ENCODE measurements at regions of chrX and their contacts with region 1.

Region 1: DNA sequence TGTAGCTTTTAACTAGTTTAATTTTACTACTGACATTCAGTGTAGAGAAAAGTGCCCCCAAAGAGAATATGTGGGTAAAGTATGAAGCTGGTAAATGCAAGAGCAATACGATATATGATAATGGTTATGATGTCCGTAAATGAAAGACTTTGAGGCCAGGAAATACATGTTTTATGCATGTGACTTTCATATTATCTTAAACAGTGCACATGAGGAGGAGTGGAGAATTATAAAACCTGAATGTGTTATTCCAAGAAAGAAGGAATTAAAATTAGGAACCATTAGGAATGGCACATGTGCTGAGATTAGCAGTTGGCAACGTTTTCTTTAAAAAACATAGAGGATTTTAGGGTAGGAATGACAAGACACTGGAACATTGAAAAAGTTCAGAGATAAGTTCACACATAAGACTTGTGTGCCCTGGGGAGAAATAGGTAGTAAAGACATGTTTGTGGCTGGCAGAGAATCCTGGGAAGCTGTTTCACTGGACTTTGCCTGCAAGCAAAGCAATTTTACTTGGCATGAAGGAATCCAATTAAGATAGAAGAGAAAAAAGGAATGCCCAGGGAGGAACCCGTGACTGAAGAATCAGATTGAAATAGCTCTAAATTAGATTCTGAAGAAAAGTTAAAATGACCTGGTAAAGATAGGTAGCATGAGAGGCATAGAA is 20.0 kb downstream of the GK start:
- DNase-seq: no peak
- H3K4me3 ChIP-seq: no peak overlapping the region
- H3K27ac ChIP-seq: no peak overlapping the region
- H3K4me1 ChIP-seq: no peaks in the 10 kb centered on the region
- H3K27me3 ChIP-seq: no peaks in the 10 kb centered on the region
- CTCF ChIP-seq: no peak
- EP300 ChIP-seq: no peak
- POLR2A ChIP-seq: no peak
- RAD21 ChIP-seq: no peak

Region 2: DNA sequence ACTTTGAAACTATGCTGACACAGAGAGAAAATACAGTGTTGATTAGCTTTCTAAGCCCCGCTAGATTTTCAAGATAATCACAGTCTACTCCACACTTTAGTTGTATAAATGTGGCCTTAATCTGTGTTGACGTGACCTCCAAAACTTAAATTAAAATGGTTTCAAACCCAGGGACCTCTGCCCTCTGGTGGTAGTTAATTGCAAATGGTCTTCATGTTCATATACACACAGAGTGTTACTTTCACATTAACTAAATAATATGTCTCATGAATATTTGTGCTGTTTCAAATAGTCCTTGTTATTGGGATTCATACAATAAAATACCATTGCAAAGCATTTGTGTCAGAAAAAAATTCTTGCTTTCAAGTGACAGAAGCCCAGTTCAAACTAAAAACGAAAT is 160.0 kb before region 1 on chrX:
- CTCF ChIA-PET with region 1: no interaction called
- POLR2A ChIA-PET with region 1: no interaction called
- DNase-seq: no peak
- H3K4me3 ChIP-seq: no peak overlapping the region
- H3K27ac ChIP-seq: no peak overlapping the region
- H3K4me1 ChIP-seq: no peaks in the 10 kb centered on the region
- H3K27me3 ChIP-seq: no peaks in the 10 kb centered on the region
- CTCF ChIP-seq: peak in 2 of 3 experiments; percentile 6 to 40; a peak in 2 of 4 replicates
- EP300 ChIP-seq: no peak
- POLR2A ChIP-seq: no peak
- RAD21 ChIP-seq: peak; percentile 31 to 40

Region 3: DNA sequence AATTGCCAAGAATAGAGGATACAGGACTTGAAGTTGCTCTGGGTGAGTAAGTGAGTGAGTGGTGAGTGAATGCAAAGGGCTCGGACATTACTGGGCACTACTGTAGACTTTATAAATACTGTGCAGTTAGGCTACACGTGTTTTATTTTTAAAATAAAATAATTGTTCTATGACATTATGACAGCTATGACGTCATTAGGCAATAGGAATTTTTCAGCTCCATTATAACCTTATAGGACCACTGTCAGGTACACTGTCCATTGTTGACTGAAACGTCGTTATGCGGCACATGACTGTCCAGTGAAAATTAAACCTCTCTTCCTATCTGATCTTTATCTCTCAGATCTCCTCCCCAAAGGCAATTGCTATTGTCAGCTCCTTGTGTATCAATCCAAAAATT is 90.6 kb before region 1 on chrX:
- CTCF ChIA-PET with region 1: no interaction called
- POLR2A ChIA-PET with region 1: no interaction called
- DNase-seq: no peak
- H3K4me3 ChIP-seq: no peak overlapping the region
- H3K27ac ChIP-seq: no peak overlapping the region
- H3K4me1 ChIP-seq: no peaks in the 10 kb centered on the region
- H3K27me3 ChIP-seq: no peaks in the 10 kb centered on the region
- CTCF ChIP-seq: no peak
- EP300 ChIP-seq: no peak
- POLR2A ChIP-seq: no peak
- RAD21 ChIP-seq: no peak

Region 4: GRCh38 chrX:30659421-30659820 is 13.8 kb before region 1 on chrX:
- CTCF ChIA-PET with region 1: interaction called, 12 read pairs
- POLR2A ChIA-PET with region 1: no interaction called
- DNase-seq: no peak
- H3K4me3 ChIP-seq: no peak overlapping the region
- H3K27ac ChIP-seq: no peak overlapping the region
- H3K4me1 ChIP-seq: no peaks in the 10 kb centered on the region
- H3K27me3 ChIP-seq: no peaks in the 10 kb centered on the region
- CTCF ChIP-seq: no peak
- EP300 ChIP-seq: no peak
- POLR2A ChIP-seq: no peak
- RAD21 ChIP-seq: no peak

Region 5: DNA sequence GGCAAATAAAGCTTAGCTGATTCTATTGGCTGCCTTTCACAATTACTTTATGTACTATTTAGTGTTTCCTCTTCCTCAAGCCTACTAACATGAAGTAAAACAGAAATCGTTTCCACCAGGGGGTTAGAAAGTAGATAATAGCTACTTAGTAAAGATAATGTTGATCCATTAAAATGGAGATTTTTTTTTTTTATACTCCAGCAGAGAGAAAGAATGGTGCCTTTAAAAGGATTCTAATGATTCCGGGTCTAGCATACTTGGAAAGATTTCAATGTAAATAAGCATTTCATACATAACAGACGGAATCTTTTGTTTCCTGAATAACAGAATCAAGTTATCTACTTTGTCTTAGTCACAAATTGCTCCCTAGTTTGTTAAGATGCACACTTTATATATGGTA is 17.1 kb after region 1 on chrX:
- CTCF ChIA-PET with region 1: no interaction called
- POLR2A ChIA-PET with region 1: no interaction called
- DNase-seq: no peak
- H3K4me3 ChIP-seq: peak overlapping the region in 1 of 4 experiments; percentile 30; a peak in 1 of 8 replicates
- H3K27ac ChIP-seq: no peak overlapping the region; the same call in 1 of the 2 replicates
- H3K4me1 ChIP-seq: peaks cover 0 to 7% (median 2%) of the 10 kb centered on the region in 4 experiments; a peak in 4 of 7 replicates
- H3K27me3 ChIP-seq: no peaks in the 10 kb centered on the region
- CTCF ChIP-seq: no peak
- EP300 ChIP-seq: no peak
- POLR2A ChIP-seq: no peak
- RAD21 ChIP-seq: no peak

Region 6: DNA sequence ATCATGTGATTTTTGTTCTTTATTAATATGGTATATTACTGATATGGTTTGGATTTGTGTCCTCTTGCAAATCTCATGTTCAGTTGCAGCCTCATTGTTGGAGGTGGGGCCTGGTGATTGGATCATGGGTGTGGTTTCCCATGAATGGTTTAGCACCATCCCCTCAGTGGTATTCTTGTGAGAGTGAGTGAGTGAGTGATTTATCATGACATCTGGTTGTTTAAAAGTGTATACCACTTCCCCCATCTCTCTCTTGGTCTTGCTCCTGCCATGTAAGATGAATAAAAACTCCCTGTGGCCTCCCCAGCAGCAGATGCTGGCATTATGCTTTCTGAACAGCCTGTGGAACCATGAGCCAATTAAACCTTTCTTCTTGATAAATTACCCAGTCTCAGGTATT is 104.3 kb after region 1 on chrX:
- CTCF ChIA-PET with region 1: no interaction called
- POLR2A ChIA-PET with region 1: no interaction called
- DNase-seq: no peak
- H3K4me3 ChIP-seq: no peak overlapping the region
- H3K27ac ChIP-seq: no peak overlapping the region
- H3K4me1 ChIP-seq: no peaks in the 10 kb centered on the region
- H3K27me3 ChIP-seq: no peaks in the 10 kb centered on the region
- CTCF ChIP-seq: no peak
- EP300 ChIP-seq: no peak
- POLR2A ChIP-seq: no peak
- RAD21 ChIP-seq: no peak